ENCODE measurements at regions of chr2 and their contacts with region 1.

Region 1: GRCh38 chr2:85354286-85355072 is at the starts of genes ELMOD3 and RETSAT:
- DNase-seq: peak; percentile 84
- ATAC-seq: peak; percentile 99
- H3K4me3 Mint-ChIP-seq: peak within 1 kb of the TSS; percentile 100
- H3K27ac Mint-ChIP-seq: peak within 1 kb of the TSS; percentile 99
- H3K4me1 Mint-ChIP-seq: peaks cover 48% of the 10 kb centered on the region
- H3K27me3 Mint-ChIP-seq: no peaks in the 10 kb centered on the region
- CTCF ChIP-seq: no peak
- total RNA-seq, gene ELMOD3: 19.2 and 25.4 TPM in 2 replicates
- total RNA-seq, gene RETSAT: 16.9 and 17.1 TPM in 2 replicates

Region 2: GRCh38 chr2:85259101-85259590 is 95.3 kb before region 1 on chr2:
- CTCF ChIA-PET with region 1: no interaction called
- POLR2A ChIA-PET with region 1: no interaction called
- intact Hi-C with region 1: no loop called
- DNase-seq: no peak
- ATAC-seq: no peak
- H3K4me3 Mint-ChIP-seq: no peak overlapping the region
- H3K27ac Mint-ChIP-seq: no peak overlapping the region
- H3K4me1 Mint-ChIP-seq: no peaks in the 10 kb centered on the region
- H3K27me3 Mint-ChIP-seq: peaks cover 18% of the 10 kb centered on the region
- CTCF ChIP-seq: no peak

Region 3: GRCh38 chr2:85369500-85369899 is 15.0 kb after region 1 on chr2:
- CTCF ChIA-PET with region 1: no interaction called
- POLR2A ChIA-PET with region 1: interaction called, 12 read pairs
- intact Hi-C with region 1: no loop called
- DNase-seq: no peak
- ATAC-seq: no peak
- H3K4me3 Mint-ChIP-seq: no peak overlapping the region
- H3K27ac Mint-ChIP-seq: no peak overlapping the region
- H3K4me1 Mint-ChIP-seq: no peaks in the 10 kb centered on the region
- H3K27me3 Mint-ChIP-seq: no peaks in the 10 kb centered on the region
- CTCF ChIP-seq: no peak

Region 4: GRCh38 chr2:85409845-85410583 is 55.5 kb after region 1 on chr2 and contains the start of gene CAPG:
- CTCF ChIA-PET with region 1: no interaction called
- POLR2A ChIA-PET with region 1: interaction called, 13 read pairs
- intact Hi-C with region 1: loop called (anchors 1 kb)
- DNase-seq: peak; percentile 76
- ATAC-seq: peak; percentile 75
- H3K4me3 Mint-ChIP-seq: peak within 1 kb of the TSS; percentile 89
- H3K27ac Mint-ChIP-seq: peak within 1 kb of the TSS; percentile 92
- H3K4me1 Mint-ChIP-seq: peaks cover 90% of the 10 kb centered on the region
- H3K27me3 Mint-ChIP-seq: no peaks in the 10 kb centered on the region
- CTCF ChIP-seq: no peak
- total RNA-seq, gene CAPG: 208 and 213 TPM in 2 replicates

Region 5: GRCh38 chr2:85428343-85428881 is 73.9 kb after region 1 on chr2:
- CTCF ChIA-PET with region 1: no interaction called
- POLR2A ChIA-PET with region 1: no interaction called
- intact Hi-C with region 1: no loop called
- DNase-seq: no peak
- ATAC-seq: no peak
- H3K4me3 Mint-ChIP-seq: no peak overlapping the region
- H3K27ac Mint-ChIP-seq: no peak overlapping the region
- H3K4me1 Mint-ChIP-seq: no peaks in the 10 kb centered on the region
- H3K27me3 Mint-ChIP-seq: no peaks in the 10 kb centered on the region
- CTCF ChIP-seq: no peak

Region 6: DNA sequence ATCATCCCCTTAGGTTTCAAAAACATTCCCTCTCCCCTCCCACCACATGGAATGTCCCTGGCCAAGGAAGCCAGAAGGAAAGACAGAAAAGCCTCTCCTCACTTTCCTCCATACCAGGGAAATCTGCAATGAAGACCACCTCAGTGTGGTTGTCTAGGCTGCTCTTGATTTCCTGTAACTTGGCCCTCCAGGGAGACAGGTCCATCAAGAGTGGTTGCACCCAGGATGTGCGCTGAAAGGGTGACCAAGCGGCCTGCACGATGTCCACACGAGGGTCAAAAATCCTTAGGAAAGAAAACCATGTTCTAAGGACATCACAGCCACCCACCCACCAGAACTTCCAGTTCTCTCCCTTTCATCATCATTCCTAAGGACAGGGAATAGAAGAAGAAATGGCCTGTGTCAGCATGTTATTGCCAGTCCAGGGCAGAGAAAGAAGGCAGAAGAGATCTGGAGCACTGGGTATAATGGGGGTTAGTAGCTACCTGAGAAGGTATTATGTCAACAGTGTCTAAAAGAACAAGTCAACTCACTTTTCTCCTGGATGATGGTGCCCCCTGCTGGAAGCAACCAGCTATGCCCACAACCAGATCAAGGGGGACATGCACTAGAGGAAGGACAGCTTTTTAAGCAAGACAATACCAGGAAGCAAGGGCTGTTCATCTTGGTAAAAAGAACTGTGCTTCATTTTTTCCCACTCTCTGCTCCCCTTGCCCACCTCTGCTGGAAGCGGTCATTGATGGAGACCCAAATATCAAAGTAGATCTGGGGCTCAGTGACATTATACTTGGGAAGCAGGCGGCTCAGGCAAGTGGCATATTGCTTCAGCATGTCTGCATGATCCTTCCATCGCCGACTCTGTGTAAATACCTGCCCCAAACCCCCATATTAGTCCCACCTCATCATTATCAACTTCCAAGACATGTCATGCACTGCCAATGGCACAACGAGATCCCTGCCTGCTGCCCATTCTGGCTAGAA is 197.5 kb after region 1 on chr2:
- CTCF ChIA-PET with region 1: interaction called, 6 read pairs
- POLR2A ChIA-PET with region 1: interaction called, 7 read pairs
- intact Hi-C with region 1: loop called (anchors 2 kb)
- DNase-seq: peak; percentile 63
- ATAC-seq: peak; percentile 98
- H3K4me3 Mint-ChIP-seq: no peak overlapping the region
- H3K27ac Mint-ChIP-seq: no peak overlapping the region
- H3K4me1 Mint-ChIP-seq: peaks cover 4% of the 10 kb centered on the region
- H3K27me3 Mint-ChIP-seq: no peaks in the 10 kb centered on the region
- CTCF ChIP-seq: peak; percentile 28

Region 7: GRCh38 chr2:85602476-85603234 is 248.2 kb after region 1 on chr2 and contains the start of gene TMEM150A:
- CTCF ChIA-PET with region 1: no interaction called
- POLR2A ChIA-PET with region 1: no interaction called
- intact Hi-C with region 1: loop called (anchors 1 kb)
- DNase-seq: peak; percentile 91
- ATAC-seq: peak; percentile 97
- H3K4me3 Mint-ChIP-seq: peak within 1 kb of the TSS; percentile 90
- H3K27ac Mint-ChIP-seq: peak within 1 kb of the TSS; percentile 84
- H3K4me1 Mint-ChIP-seq: peaks cover 31% of the 10 kb centered on the region
- H3K27me3 Mint-ChIP-seq: no peaks in the 10 kb centered on the region
- CTCF ChIP-seq: no peak
- total RNA-seq, gene TMEM150A: 13.2 and 15.0 TPM in 2 replicates

Region 8: DNA sequence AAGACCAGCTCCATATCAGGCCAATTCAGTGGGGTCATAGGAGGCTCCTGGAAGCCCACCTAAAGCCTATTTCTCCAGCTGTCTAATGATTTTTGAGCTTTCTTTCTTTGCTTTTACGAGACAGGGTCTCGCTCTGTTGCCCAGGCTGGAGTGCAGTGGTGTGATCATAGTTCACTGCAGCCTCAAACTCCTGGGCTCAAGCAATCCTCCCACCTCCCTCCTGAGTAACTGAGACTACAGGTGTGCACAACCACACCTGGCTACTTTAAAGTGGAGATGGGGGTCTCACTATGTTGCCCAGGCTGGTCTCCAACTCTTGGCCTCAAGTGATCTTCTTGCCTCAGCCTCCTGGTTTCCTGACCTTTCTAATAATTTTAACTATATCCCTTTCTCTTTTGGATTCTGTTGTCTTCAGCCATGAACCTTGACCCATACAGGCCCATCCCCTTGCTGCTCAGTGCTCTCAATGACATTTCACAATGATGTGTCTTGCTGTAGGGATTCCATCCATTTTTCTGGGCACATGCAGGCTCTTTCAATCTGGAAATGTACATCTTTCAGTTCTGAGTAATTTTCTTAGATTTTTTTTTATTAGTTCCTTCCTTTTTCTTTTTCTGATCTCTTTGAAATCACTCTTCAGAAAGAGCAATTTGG is 369.4 kb after region 1 on chr2:
- CTCF ChIA-PET with region 1: no interaction called
- POLR2A ChIA-PET with region 1: no interaction called
- intact Hi-C with region 1: no loop called
- DNase-seq: no peak
- ATAC-seq: no peak
- H3K4me3 Mint-ChIP-seq: no peak overlapping the region
- H3K27ac Mint-ChIP-seq: no peak overlapping the region
- H3K4me1 Mint-ChIP-seq: peaks cover 1% of the 10 kb centered on the region
- H3K27me3 Mint-ChIP-seq: peaks cover 17% of the 10 kb centered on the region
- CTCF ChIP-seq: no peak

Measured in activated B cell treated with CpG ODN at 0.5 μM for 24 hours (primary cell).